ENCODE measurements at regions of chr3 and their contacts with region 1.

Region 1: GRCh38 chr3:62211675-62212429 is 161.5 kb downstream of the FEZF2 start:
- DNase-seq: no peak
- CTCF ChIP-seq: no peak

Region 2: GRCh38 chr3:62188681-62189383 is 23.0 kb before region 1 on chr3:
- CTCF ChIA-PET with region 1: interaction called, 13 read pairs
- POLR2A ChIA-PET with region 1: no interaction called
- DNase-seq: peak; percentile 80
- CTCF ChIP-seq: peak; percentile 75

Measured in GM10248 (cell line).